ENCODE measurements at regions of chr12 and their contacts with region 1.

Region 1: DNA sequence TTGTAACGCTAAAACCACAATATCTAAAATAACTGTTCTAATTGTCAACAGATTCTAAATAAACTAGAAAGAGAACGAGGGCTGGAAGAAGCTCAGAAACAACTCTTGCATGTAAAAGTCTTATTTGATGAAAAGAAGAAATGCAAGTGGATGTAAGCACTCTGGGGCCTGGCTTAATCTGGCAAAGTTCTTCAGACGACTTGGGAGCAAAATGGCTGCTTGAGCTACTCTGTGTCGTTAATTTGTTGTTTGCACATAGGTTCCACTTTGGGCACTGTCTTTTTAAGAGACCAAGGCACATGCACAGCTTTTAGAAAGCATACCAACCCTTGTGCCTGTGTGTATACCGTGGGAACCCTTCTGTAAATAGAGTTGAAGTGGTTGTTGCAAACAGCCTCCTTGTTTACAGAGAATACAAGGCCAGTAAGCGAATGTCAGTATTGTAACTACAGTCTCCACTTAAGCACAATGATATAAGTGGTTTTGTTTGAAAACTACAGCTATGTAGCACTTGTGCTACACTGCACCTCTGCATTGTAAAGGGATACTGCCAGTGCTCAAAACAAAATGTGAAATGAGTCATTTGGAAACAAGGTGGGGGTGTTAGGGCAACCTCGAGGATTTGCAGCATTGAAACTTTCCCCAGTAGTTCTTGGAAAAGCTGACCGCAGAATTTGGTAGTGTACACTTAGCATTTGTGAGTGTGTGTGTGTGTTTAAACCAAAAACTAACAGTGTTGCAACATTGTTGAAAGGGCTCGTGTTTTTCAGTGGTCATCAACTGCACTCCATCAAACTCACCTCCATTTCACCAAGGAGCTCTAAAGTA is 154.3 kb downstream of the CEP83 start:
- DNase-seq: peak; percentile 69
- H3K4me3 Mint-ChIP-seq: peak overlapping the region; percentile 31
- H3K27ac Mint-ChIP-seq: peak overlapping the region; percentile 80
- H3K4me1 Mint-ChIP-seq: peaks cover 59% of the 10 kb centered on the region
- H3K27me3 Mint-ChIP-seq: no peaks in the 10 kb centered on the region

Region 2: DNA sequence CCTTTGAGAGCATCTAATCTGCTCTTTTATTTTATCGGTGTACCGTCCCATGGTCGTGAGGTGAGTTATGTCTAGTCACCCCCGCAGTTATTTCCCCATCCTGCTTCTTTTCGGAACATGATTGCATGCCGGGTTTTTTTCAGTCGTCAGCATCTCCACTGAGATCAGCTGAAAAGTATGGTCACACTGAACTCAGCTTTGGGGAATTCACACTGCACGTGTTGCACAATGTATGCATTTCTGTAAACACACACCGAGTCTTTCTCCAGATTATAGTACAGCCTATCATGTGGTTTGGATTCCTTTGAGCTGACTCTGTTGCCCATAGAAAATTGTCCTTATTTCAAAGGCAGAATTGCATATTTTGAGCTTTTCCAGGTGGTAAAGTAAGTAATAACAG is 132.4 kb before region 1 on chr12:
- intact Hi-C with region 1: loop called (anchors 1 kb)
- DNase-seq: no peak
- H3K4me3 Mint-ChIP-seq: no peak overlapping the region
- H3K27ac Mint-ChIP-seq: no peak overlapping the region
- H3K4me1 Mint-ChIP-seq: peaks cover 58% of the 10 kb centered on the region
- H3K27me3 Mint-ChIP-seq: no peaks in the 10 kb centered on the region

Region 3: GRCh38 chr12:94262228-94263010 is 42.9 kb before region 1 on chr12:
- intact Hi-C with region 1: loop called (anchors 1 kb)
- DNase-seq: peak; percentile 52
- H3K4me3 Mint-ChIP-seq: peak overlapping the region; percentile 80
- H3K27ac Mint-ChIP-seq: peak overlapping the region; percentile 91
- H3K4me1 Mint-ChIP-seq: peaks cover 31% of the 10 kb centered on the region
- H3K27me3 Mint-ChIP-seq: no peaks in the 10 kb centered on the region

Region 4: DNA sequence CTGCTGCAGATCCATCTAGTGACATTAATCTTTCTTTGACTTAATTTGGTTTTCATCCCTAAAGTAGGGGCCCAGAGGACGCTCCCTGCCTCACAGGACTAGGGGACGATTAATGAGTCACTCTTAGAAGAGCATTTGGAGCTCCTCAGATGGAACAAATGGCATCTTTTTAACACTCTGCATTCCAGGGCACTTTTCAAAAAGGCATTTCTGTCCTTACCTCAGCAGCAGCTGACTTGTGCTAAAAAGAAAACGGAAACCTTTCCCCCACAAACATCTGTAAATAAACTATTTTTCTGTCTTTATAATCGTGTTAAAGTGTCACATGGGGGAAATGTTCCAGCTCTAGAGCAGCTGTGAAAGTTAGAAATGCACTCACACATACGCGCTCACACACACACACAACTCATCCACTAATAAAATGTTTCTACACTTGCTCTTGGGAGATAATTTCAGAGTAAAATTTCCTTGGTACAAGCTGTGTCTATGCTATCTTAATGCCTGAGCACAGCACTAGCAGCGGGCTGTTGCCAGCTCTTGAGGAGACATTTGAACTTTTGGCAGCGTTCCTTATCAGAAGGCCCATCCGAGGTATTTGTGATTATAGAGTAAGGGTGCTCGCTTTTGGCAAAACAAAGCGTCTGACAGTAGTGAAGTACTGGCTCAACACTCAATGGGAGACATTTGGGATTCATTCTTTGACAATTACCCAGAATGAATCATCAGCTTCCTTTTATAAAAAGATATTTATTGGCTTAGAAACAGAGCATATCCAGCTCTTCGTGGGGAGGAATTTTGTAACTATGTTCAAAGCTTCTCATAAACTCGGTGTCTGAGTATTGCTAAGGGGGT is 15.7 kb before region 1 on chr12:
- intact Hi-C with region 1: no loop called
- DNase-seq: no peak
- H3K4me3 Mint-ChIP-seq: no peak overlapping the region
- H3K27ac Mint-ChIP-seq: no peak overlapping the region
- H3K4me1 Mint-ChIP-seq: peaks cover 2% of the 10 kb centered on the region
- H3K27me3 Mint-ChIP-seq: no peaks in the 10 kb centered on the region

Region 5: DNA sequence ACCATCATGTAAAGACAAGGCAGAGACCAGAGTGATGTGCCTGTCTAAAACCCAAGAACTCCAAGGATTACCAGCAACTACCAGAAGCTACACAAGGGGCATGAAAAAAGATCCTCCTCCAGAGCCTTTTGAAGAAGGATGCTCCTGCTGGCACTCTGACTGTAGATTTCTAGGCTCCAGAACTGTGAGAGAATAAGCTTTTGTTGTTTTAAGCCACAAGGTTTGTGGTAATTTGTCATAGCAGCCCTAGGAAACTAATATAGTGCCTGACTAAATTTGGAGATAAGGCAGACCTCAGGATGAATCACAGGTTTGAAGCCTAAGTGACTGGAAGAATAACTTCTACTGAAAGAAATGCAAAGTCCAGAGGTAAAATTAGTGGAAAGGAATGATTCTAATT is 21.4 kb after region 1 on chr12:
- intact Hi-C with region 1: loop called (anchors 1 kb)
- DNase-seq: no peak
- H3K4me3 Mint-ChIP-seq: no peak overlapping the region
- H3K27ac Mint-ChIP-seq: peak overlapping the region; percentile 44
- H3K4me1 Mint-ChIP-seq: peaks cover 35% of the 10 kb centered on the region
- H3K27me3 Mint-ChIP-seq: no peaks in the 10 kb centered on the region

Region 6: GRCh38 chr12:94379479-94380113 is 74.3 kb after region 1 on chr12:
- intact Hi-C with region 1: loop called (anchors 1 kb)
- DNase-seq: no peak
- H3K4me3 Mint-ChIP-seq: no peak overlapping the region
- H3K27ac Mint-ChIP-seq: peak overlapping the region; percentile 50
- H3K4me1 Mint-ChIP-seq: peaks cover 30% of the 10 kb centered on the region
- H3K27me3 Mint-ChIP-seq: no peaks in the 10 kb centered on the region

Region 7: GRCh38 chr12:94532490-94533422 is 227.4 kb after region 1 on chr12:
- intact Hi-C with region 1: loop called (anchors 10 kb)
- DNase-seq: peak; percentile 55
- H3K4me3 Mint-ChIP-seq: no peak overlapping the region
- H3K27ac Mint-ChIP-seq: no peak overlapping the region
- H3K4me1 Mint-ChIP-seq: peaks cover 8% of the 10 kb centered on the region
- H3K27me3 Mint-ChIP-seq: peaks cover 9% of the 10 kb centered on the region

Region 8: DNA sequence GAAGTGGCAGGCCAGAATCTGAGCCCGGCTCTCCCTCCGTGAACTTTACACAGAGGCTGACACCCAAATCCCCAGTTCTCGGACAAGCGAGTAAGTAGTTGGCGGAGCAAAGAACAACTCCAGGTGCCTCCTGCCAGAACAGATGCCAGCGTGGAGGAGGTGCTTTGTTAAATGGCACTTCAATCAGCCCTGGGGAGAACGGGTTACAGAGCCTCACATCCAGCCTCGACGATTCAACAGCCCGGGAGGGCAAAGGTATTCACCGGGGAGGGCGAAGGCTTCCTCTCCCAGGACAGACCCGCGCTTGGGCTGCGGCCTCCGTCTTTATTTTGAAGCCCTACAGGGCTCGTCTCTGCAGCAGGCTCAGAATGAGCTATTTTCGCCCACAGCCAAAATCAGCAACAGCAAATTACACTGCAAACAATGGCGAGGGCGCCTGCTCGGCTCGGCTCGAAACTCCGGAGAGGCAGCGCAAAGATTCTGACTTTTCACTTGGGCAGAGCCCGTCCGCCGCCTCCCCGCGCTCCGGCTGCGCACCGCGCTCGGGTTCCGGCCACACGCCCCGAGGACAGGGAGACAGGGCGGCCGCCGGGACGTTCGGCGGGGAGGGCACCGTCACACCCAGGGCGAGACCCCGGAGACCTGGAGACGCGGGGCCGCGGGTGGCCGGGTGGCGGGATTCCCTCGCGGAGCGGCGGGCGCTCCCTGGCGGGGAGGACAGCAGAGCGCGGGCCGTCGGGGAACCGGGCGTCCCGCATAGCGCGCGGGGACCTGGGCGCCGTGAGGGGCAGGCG is 344.2 kb after region 1 on chr12:
- intact Hi-C with region 1: no loop called
- DNase-seq: no peak
- H3K4me3 Mint-ChIP-seq: peak overlapping the region; percentile 76
- H3K27ac Mint-ChIP-seq: no peak overlapping the region
- H3K4me1 Mint-ChIP-seq: peaks cover 18% of the 10 kb centered on the region
- H3K27me3 Mint-ChIP-seq: peaks cover 74% of the 10 kb centered on the region